ENCODE measurements at regions of chr6 and their contacts with region 1.

Region 1: GRCh38 chr6:41779793-41780545 is at the start of gene FRS3:
- DNase-seq: peak; percentile 99
- H3K4me3 Mint-ChIP-seq: peak within 1 kb of the TSS; percentile 85
- H3K27ac Mint-ChIP-seq: peak within 1 kb of the TSS; percentile 38
- H3K4me1 Mint-ChIP-seq: peaks cover 13% of the 10 kb centered on the region
- H3K27me3 Mint-ChIP-seq: peaks cover 6% of the 10 kb centered on the region
- total RNA-seq, gene FRS3: 4.8 to 5.5 TPM

Region 2: GRCh38 chr6:41705996-41706835 is 73.8 kb before region 1 on chr6:
- CTCF ChIA-PET with region 1: interaction called, 12 read pairs
- POLR2A ChIA-PET with region 1: no interaction called
- intact Hi-C with region 1: loop called (anchors 1 kb)
- DNase-seq: peak; percentile 90
- H3K4me3 Mint-ChIP-seq: peak overlapping the region; percentile 38
- H3K27ac Mint-ChIP-seq: peak overlapping the region; percentile 89
- H3K4me1 Mint-ChIP-seq: peaks cover 36% of the 10 kb centered on the region
- H3K27me3 Mint-ChIP-seq: no peaks in the 10 kb centered on the region

Region 3: GRCh38 chr6:42166444-42167141 is 386.6 kb after region 1 on chr6:
- CTCF ChIA-PET with region 1: no interaction called
- POLR2A ChIA-PET with region 1: no interaction called
- intact Hi-C with region 1: loop called (anchors 1 kb)
- DNase-seq: peak; percentile 87
- H3K4me3 Mint-ChIP-seq: no peak overlapping the region
- H3K27ac Mint-ChIP-seq: no peak overlapping the region
- H3K4me1 Mint-ChIP-seq: no peaks in the 10 kb centered on the region
- H3K27me3 Mint-ChIP-seq: no peaks in the 10 kb centered on the region